OCI-LY7 (cell line): ENCODE measurements at regions of chr5 and their contacts with region 1.

Region 1: GRCh38 chr5:116908537-116908936 is 333.9 kb upstream of the SEMA6A start:
- DNase-seq: peak; percentile 61
- H3K4me3 ChIP-seq: peak overlapping the region; percentile 42
- H3K27ac ChIP-seq: peak overlapping the region; percentile 71
- H3K4me1 ChIP-seq: peaks cover 63% of the 10 kb centered on the region
- CTCF ChIP-seq: no peak

Region 2: GRCh38 chr5:115625579-115626444 is 1282.7 kb before region 1 on chr5 and contains the start of gene TMED7:
- CTCF ChIA-PET with region 1: no interaction called
- POLR2A ChIA-PET with region 1: interaction called, 3 read pairs
- intact Hi-C with region 1: loop called (anchors 10 kb)
- DNase-seq: peak; percentile 98
- H3K4me3 ChIP-seq: peak within 1 kb of the TSS; percentile 94
- H3K27ac ChIP-seq: peak within 1 kb of the TSS; percentile 70
- H3K4me1 ChIP-seq: peaks cover 39% of the 10 kb centered on the region
- CTCF ChIP-seq: 0 out of 2 replicates have a peak, but pooled peaks have one; percentile 17
- total RNA-seq, gene TMED7: 50.9 and 55.1 TPM in 2 replicates

Region 3: DNA sequence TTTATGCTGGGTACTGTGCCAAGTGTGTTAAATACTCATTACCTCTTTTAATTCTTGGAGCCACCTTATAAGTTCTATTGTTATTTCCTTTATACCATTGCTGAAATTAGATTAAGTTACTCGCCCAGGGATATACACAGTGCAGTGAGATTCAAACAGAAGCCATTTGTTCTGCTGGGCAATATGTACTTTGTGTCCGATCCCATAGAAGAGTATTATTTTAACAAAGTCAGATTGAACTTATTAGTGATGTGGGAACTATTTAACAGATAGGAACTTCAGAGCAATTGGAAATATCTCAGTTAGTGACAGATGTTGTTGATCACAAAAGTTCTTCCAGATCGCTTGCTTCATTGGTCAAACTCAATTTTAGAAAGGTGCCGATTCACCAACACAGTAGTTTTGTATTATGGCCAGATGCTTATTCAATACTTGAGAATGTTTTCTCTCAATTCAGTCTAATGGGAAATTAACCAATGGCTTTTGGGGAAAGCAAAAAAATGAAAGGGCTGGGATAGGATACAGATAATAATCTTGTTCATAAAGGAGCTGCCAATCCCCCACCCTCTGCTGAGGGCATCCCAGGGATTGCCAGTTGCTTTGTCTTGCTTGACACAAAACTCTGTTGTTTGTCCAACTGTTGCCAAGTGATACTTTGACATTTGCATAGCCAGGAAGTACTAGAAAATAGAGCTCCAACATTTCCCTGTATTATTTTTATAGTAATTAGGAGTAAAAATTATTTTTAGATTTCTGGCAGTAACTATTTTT is 239.1 kb before region 1 on chr5:
- CTCF ChIA-PET with region 1: no interaction called
- POLR2A ChIA-PET with region 1: no interaction called
- intact Hi-C with region 1: no loop called
- DNase-seq: no peak
- H3K4me3 ChIP-seq: no peak overlapping the region
- H3K27ac ChIP-seq: no peak overlapping the region
- H3K4me1 ChIP-seq: no peaks in the 10 kb centered on the region
- CTCF ChIP-seq: no peak

Region 4: DNA sequence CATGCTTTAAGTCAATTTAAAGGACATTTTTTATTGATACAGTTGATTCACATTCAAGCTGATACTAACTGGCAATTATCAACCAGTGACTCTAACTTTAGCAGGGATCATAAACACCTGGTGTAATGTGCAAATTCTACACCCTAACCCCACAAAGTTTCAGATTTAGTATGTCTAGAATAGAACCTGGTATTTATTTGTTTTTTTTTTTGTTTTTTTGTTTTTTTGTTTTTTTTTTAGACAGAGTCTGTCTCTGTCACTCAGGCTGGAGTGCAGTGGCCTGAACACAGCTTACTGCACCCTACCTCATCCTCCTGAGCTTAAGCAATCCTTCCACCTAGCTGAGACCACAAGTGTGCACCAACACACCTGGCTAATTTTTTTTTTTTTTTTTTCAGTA is 22.7 kb before region 1 on chr5:
- CTCF ChIA-PET with region 1: no interaction called
- POLR2A ChIA-PET with region 1: interaction called, 5 read pairs
- intact Hi-C with region 1: loop called (anchors 2 kb)
- DNase-seq: no peak
- H3K4me3 ChIP-seq: no peak overlapping the region
- H3K27ac ChIP-seq: no peak overlapping the region
- H3K4me1 ChIP-seq: peaks cover 8% of the 10 kb centered on the region
- CTCF ChIP-seq: no peak